Activated T-helper 1 cell treated with anti-CD3 and anti-CD28 coated beads, Interleukin-12 subunit alpha, Interleukin-12 subunit beta, Interleukin-2, Interleukin-4 antibody, amounts not matched to agents 30 ng/mL and 10 ng/mL and 1 ng/mL, durations not matched to agents 14 hours and 24 hours and 36 hours (primary cell): ENCODE measurements at regions of chr11 and their contacts with region 1.

Region 1: DNA sequence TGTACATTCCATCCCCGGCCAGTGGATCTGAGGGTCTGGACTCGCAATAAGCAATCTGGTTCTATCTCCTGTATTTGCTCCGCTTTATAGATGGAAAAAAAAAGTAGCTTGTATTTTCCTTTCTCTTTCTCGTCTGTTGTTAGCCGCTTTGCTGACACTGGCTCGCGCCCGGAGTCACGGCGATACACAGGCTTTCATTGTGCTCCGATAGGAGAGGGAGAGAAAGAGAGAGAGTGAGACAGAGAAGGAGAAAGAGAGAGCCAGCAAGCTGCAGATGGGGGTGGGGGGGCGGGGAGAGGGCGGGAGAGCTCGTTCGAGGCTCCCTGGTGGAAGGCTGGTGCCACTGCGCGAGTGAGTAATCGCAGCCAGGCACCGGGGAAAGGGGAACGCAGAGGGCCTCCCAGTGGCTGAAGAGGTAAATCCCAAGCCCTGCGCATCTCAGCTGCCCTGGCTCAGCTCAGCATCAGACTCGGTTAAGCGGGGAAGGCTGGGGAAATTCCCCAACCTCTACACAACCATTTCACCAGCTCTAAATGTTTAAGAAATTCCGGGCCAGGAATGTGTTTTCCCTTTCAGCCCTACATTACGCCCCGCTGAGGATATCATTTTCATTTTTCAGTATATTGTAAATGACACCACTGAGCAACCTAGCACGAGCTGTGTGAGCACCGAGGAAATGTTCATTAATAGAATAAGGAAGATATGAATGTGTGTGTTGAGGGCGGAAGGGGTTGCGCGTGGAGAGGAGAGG is at the start of gene MAML2:
- DNase-seq: peak; percentile 85
- H3K4me3 Mint-ChIP-seq: peak within 1 kb of the TSS; percentile 94
- H3K27ac Mint-ChIP-seq: peak within 1 kb of the TSS; percentile 89
- H3K4me1 Mint-ChIP-seq: peaks cover 49% of the 10 kb centered on the region
- H3K27me3 Mint-ChIP-seq: no peaks in the 10 kb centered on the region
- total RNA-seq, gene MAML2: 10.0 and 10.1 TPM in 2 replicates

Region 2: DNA sequence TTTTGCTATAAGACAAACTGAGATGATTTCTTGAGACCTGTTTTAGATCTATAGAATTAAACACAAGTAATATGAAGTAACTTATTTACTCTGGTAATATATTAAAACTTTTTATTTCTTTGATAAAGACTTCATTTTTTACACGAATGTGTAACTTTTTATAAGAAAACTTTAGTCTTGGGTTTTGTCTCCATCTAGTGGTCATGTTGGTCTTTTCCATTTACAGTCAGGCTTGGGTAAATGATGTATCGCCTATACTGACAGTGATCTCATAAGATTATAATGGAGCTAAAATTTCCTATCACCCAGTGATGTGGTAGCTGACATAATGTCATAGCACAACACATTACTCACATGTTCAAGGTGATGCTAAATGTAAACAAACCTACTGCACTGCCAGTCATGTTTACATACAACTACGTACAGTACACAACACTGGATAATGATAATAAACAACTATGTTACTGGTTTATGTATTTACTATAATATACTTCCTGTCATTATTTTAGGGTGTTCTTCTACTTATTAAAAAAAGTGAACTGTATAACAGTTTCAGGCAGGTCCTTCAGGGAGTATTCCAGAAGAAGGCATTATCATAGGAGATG is 1838.3 kb before region 1 on chr11:
- intact Hi-C with region 1: no loop called
- DNase-seq: no peak
- H3K4me3 Mint-ChIP-seq: no peak overlapping the region
- H3K27ac Mint-ChIP-seq: no peak overlapping the region
- H3K4me1 Mint-ChIP-seq: no peaks in the 10 kb centered on the region
- H3K27me3 Mint-ChIP-seq: peaks cover 16% of the 10 kb centered on the region

Region 3: DNA sequence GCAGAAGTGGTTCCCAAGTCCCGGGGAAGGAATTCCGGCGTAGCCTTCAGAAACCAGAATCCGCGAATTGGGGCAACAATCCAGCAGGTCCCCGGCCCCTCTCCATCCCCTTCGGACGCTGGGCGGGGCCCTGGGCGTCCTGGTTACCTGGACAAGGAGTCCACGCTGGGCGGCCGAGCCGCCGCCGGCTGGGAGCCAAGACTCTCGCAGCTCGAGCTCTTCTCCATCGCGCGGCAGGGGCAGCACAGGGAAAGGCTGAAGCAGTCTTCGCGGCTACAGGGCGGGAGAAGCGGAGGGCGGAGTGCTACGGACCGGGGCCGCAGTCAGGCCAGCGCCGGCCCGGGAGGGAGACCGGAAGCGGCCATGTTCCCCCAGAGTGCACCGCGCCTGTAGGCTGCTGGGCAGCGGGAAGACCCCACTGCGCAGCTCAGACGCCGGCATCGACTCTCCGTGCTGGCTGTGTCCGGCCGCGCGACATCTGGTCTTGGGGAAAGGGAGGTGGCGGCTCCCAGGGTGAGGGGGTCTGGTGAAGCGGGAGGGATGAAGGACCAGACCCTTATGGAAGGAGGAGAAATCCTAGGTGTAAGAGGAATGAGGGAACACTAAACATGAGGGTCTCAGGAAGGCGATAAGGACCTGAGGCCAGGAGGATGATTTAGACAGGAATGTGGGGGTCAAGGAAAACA is 419.3 kb before region 1 on chr11 and contains the start of gene MTMR2:
- intact Hi-C with region 1: loop called (anchors 2 kb)
- DNase-seq: peak; percentile 39
- H3K4me3 Mint-ChIP-seq: peak within 1 kb of the TSS; percentile 100
- H3K27ac Mint-ChIP-seq: peak within 1 kb of the TSS; percentile 86
- H3K4me1 Mint-ChIP-seq: peaks cover 31% of the 10 kb centered on the region
- H3K27me3 Mint-ChIP-seq: peaks cover 3% of the 10 kb centered on the region
- total RNA-seq, gene MTMR2: 41.3 and 41.7 TPM in 2 replicates

Region 4: DNA sequence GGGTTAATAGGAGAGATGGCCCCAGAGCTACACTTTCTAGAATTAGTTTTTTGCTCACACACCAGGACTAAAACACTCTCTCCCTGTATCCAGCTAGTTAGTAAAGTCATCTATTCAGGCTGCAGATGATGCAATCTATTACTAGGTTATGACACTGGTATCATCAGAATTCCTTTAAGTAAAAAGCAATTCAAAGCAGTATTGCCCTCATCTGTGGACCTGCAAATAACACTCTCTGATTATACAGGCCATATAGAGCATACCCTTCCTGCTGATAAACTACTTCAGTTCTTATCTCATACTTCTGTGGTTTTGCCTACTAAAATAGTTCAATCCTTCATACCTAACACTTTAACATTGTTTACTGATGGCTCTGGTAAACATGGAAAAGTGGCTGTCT is 405.8 kb before region 1 on chr11:
- intact Hi-C with region 1: no loop called
- DNase-seq: no peak
- H3K4me3 Mint-ChIP-seq: no peak overlapping the region
- H3K27ac Mint-ChIP-seq: no peak overlapping the region
- H3K4me1 Mint-ChIP-seq: no peaks in the 10 kb centered on the region
- H3K27me3 Mint-ChIP-seq: peaks cover 3% of the 10 kb centered on the region

Region 5: DNA sequence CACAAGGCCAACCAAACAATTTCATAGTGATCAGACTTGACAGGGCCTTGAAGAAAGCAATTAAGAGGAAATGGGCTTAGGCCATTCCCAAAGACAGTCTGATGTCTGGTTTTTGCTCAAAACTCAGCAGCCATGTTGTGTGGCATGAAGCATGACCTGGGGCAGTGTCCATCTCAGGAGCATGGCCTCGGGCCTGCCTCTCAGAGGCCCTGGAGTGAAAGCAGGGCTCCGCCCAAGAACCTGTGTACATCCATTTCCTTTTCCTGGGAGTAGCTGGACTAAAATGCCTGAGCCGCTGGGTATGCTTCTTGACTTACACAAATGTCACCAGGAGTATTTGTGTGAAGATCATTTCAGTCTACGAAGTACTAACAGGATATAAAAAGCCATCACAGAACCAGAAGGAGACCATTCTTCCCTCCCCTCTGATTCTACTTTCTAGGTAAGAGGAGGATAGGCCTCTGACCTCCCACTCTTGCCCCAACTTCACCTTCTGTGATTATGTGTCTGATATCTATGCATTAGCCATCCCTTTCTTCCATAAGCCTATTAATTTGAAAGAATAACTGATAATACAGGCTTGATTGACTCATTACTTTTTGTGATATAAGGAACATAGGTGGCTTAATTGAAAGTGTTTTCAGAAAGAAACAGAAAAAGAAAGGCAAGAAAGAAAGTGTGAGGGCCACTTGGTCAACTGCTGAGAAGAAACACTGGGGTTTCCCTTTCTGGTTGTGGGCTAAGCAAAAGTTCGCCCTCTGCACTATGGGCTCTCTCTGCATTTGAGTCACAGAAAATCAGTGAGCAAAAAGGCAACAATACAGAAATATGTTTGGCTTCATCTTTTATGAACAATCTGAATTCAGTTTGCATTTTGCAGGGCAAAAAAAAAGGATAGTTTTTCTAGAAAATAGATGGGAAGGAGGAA is 230.7 kb before region 1 on chr11:
- intact Hi-C with region 1: loop called (anchors 1 kb)
- DNase-seq: no peak
- H3K4me3 Mint-ChIP-seq: peak overlapping the region; percentile 50
- H3K27ac Mint-ChIP-seq: peak overlapping the region; percentile 84
- H3K4me1 Mint-ChIP-seq: peaks cover 32% of the 10 kb centered on the region
- H3K27me3 Mint-ChIP-seq: no peaks in the 10 kb centered on the region

Region 6: GRCh38 chr11:96235751-96236150 is 107.4 kb before region 1 on chr11:
- intact Hi-C with region 1: loop called (anchors 1 kb)
- DNase-seq: peak; percentile 56
- H3K4me3 Mint-ChIP-seq: peak overlapping the region; percentile 74
- H3K27ac Mint-ChIP-seq: peak overlapping the region; percentile 93
- H3K4me1 Mint-ChIP-seq: peaks cover 13% of the 10 kb centered on the region
- H3K27me3 Mint-ChIP-seq: no peaks in the 10 kb centered on the region

Region 7: DNA sequence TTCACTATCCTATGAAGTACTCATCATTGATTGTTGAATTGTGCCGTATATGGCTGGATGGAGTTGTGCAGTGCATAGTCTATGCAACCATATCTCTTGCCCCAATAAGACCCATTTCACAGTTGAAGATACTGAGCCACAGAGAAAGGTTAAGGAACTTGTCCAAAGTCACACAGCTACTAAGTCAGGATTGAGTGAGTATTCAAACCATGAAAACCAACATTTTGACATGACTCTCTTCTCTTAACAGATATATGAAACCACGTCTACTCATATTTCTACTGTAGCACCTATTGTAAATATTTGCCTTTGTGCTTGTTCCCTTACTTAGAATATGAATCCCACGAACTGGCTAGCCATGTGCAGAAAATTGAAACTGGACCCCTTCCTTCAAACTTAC is 58.2 kb before region 1 on chr11:
- intact Hi-C with region 1: loop called (anchors 1 kb)
- DNase-seq: no peak
- H3K4me3 Mint-ChIP-seq: no peak overlapping the region
- H3K27ac Mint-ChIP-seq: no peak overlapping the region
- H3K4me1 Mint-ChIP-seq: peaks cover 50% of the 10 kb centered on the region
- H3K27me3 Mint-ChIP-seq: no peaks in the 10 kb centered on the region

Region 8: GRCh38 chr11:96357794-96358193 is 14.7 kb after region 1 on chr11:
- intact Hi-C with region 1: no loop called
- DNase-seq: no peak
- H3K4me3 Mint-ChIP-seq: no peak overlapping the region
- H3K27ac Mint-ChIP-seq: no peak overlapping the region
- H3K4me1 Mint-ChIP-seq: peaks cover 28% of the 10 kb centered on the region
- H3K27me3 Mint-ChIP-seq: no peaks in the 10 kb centered on the region

Region 9: DNA sequence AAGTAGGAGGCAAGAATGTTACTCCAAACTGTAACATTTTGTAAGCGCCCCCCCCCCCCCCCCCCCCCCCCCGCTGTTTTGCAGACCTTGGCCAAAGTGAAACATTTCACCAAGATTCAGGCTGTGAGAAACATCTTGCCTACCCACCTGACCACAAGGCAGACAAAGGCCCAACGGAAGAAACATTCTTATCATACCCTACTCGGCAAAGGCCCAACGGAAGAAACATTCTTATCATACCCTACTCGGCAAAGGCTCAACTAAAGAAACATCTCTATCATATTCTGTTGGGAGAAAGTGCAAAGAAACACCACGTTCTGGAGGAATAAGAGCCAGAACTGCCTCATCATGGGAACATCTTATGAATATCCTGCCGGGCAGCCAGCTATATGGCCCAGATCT is 163.8 kb after region 1 on chr11:
- intact Hi-C with region 1: no loop called
- DNase-seq: no peak
- H3K4me3 Mint-ChIP-seq: no peak overlapping the region
- H3K27ac Mint-ChIP-seq: no peak overlapping the region
- H3K4me1 Mint-ChIP-seq: no peaks in the 10 kb centered on the region
- H3K27me3 Mint-ChIP-seq: peaks cover 4% of the 10 kb centered on the region